ENCODE measurements at regions of chr10 and their contacts with region 1.

Region 1: DNA sequence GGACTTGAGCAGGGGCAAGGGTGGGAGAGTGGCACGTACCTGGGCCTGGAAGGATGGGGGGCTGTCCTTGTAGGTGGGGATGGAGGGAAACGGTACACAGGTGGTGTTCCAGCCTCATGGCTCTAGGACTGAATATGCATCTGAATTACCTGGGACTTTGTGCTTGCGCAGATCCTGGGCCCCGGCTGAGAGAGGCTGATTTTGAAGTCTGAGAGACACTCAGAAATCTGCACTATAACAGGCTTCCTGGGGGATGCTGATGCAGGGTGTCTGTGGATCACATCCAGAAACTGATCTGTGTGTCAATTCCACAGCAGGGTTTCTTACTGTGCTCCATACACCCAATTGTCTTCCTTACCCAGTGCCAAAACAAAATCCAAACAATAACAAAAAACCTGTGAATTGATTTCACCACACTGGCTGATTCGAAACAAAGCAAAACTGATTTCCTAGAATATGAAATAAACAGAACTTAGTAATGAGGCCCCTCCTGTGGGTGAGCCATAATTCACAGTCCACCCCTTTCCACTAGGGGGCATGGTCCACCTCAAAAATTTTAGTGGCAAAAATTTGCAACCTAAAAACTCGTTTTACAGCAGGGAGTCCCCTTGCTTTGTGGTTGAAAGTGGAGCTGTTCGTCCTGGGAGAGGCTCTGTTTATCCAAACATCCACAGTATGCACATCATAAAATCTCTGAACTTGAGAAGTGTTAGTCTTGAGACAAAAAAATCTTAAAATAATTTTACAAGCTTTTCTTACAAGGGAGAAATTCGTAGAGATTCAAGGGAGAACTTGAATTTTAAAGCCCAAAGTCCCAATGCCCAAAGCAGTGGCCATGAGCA is 32.0 kb upstream of the PLEKHA1 start:
- DNase-seq: peak in 4 of 10 donors; percentile 9 to 63 (median 40)
- H3K4me3 ChIP-seq: no peak overlapping the region
- H3K27ac ChIP-seq: peak overlapping the region in 57 of 59 donors; percentile 3 to 98 (median 78)
- H3K27me3 ChIP-seq: no peaks in the 10 kb centered on the region
- CTCF ChIP-seq: peak; percentile 75 to 95 (median 90)

Region 2: GRCh38 chr10:122298598-122299301 is 43.8 kb before region 1 on chr10:
- intact Hi-C with region 1: loop called (anchors 2 to 5 kb)
- DNase-seq: peak in 9 of 10 donors; percentile 38 to 81 (median 76)
- H3K4me3 ChIP-seq: peak overlapping the region in 55 of 59 donors; percentile 6 to 66 (median 38)
- H3K27ac ChIP-seq: peak overlapping the region in 56 of 59 donors; percentile 38 to 100 (median 94)
- H3K27me3 ChIP-seq: no peaks in the 10 kb centered on the region
- CTCF ChIP-seq: peak; percentile 65 to 99 (median 96)

Region 3: DNA sequence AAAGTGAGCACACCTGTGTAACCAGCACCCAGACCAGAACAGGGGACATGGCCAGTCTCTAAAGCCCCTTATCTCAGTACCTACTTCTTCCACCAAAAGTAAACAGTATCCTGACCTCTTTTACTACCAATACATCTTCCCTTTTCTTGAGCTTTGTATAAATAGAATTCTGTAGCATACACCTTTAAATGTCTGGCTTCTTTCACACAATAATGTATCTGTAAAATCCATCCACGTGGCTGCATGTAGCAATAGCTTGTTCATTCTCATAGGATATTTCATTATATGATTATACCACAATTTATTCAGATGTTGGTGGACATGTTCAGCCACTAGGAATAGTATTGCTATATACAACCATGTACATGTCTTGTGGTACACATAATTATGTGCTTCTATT is 30.8 kb before region 1 on chr10:
- intact Hi-C with region 1: no loop called
- DNase-seq: no peak
- H3K4me3 ChIP-seq: no peak overlapping the region
- H3K27ac ChIP-seq: peak overlapping the region in 1 of 59 donors; percentile 14
- H3K27me3 ChIP-seq: no peaks in the 10 kb centered on the region
- CTCF ChIP-seq: no peak

Region 4: DNA sequence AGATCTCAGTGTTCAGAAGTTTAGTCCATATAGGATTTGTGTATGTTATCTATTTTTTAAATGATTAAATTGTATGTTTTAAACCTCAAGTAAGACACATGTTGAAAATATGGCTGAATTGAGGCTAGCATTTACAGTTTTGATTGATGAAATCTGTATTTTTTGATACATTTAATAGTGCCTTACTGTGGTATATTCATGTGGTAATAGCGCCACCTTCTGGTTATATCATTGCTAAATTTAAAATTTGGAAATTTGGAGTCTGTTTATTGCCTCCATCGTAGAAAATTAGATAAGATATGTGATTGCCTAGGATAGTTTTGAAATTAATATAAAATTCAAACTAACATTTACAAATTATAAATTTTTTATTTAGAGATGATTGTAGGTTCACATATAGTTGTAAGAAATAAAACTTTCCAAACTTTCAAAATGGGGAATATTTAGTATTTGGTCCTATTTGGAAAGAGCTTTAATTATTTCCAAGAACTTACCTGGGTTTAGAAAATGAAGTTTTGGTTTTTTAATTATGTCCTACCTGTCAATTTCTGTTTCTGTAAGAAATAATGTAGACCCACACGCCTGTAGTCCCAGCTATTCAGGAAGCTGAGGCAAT is 92.8 kb after region 1 on chr10:
- intact Hi-C with region 1: loop called (anchors 5 to 10 kb)
- DNase-seq: no peak
- H3K4me3 ChIP-seq: no peak overlapping the region
- H3K27ac ChIP-seq: peak overlapping the region in 31 of 59 donors; percentile 2 to 71 (median 30)
- H3K27me3 ChIP-seq: no peaks in the 10 kb centered on the region
- CTCF ChIP-seq: peak; percentile 71 to 96 (median 85)

Region 5: GRCh38 chr10:122525788-122526187 is 183.3 kb after region 1 on chr10:
- intact Hi-C with region 1: no loop called
- DNase-seq: no peak
- H3K4me3 ChIP-seq: no peak overlapping the region
- H3K27ac ChIP-seq: no peak overlapping the region
- H3K27me3 ChIP-seq: no peaks in the 10 kb centered on the region
- CTCF ChIP-seq: peak in 25 of 56 donors; percentile 9 to 38 (median 27)